ENCODE measurements at regions of chr2 and their contacts with region 1.

Region 1: GRCh38 chr2:9984217-9984739 is 32.8 kb downstream of the GRHL1 start:
- DNase-seq: peak; percentile 78
- H3K4me3 ChIP-seq: no peak overlapping the region
- H3K27ac ChIP-seq: no peak overlapping the region
- H3K4me1 ChIP-seq: peaks cover 22 to 25% of the 10 kb centered on the region in 2 experiments
- H3K27me3 ChIP-seq: no peaks in the 10 kb centered on the region
- CTCF ChIP-seq: peak; percentile 93
- EP300 ChIP-seq: no peak
- RAD21 ChIP-seq: peak; percentile 89

Region 2: GRCh38 chr2:9843229-9844035 is 140.8 kb before region 1 on chr2 and contains the start of gene TAF1B:
- CTCF ChIA-PET with region 1: interaction called, 12 read pairs
- POLR2A ChIA-PET with region 1: no interaction called
- DNase-seq: peak; percentile 99
- H3K4me3 ChIP-seq: peak within 1 kb of the TSS; percentile 60 to 86
- H3K27ac ChIP-seq: peak within 1 kb of the TSS; percentile 89 to 95
- H3K4me1 ChIP-seq: peaks cover 15 to 20% of the 10 kb centered on the region in 2 experiments
- H3K27me3 ChIP-seq: no peaks in the 10 kb centered on the region
- CTCF ChIP-seq: peak; percentile 43
- EP300 ChIP-seq: no peak
- RAD21 ChIP-seq: no peak
- polyA plus RNA-seq, gene TAF1B: 7.8 and 8.3 TPM in 2 replicates

Region 3: GRCh38 chr2:9961013-9961412 is 23.3 kb before region 1 on chr2:
- CTCF ChIA-PET with region 1: interaction called, 107 read pairs
- POLR2A ChIA-PET with region 1: no interaction called
- DNase-seq: peak; percentile 88
- H3K4me3 ChIP-seq: no peak overlapping the region
- H3K27ac ChIP-seq: no peak overlapping the region; a peak in 1 of 4 replicates
- H3K4me1 ChIP-seq: peaks cover 0 to 9% of the 10 kb centered on the region in 2 experiments; a peak in 2 of 4 replicates
- H3K27me3 ChIP-seq: no peaks in the 10 kb centered on the region
- CTCF ChIP-seq: no peak
- EP300 ChIP-seq: no peak
- RAD21 ChIP-seq: no peak

Region 4: GRCh38 chr2:10019174-10019573 is 34.9 kb after region 1 on chr2:
- CTCF ChIA-PET with region 1: interaction called, 38 read pairs
- POLR2A ChIA-PET with region 1: no interaction called
- DNase-seq: no peak
- H3K4me3 ChIP-seq: no peak overlapping the region
- H3K27ac ChIP-seq: no peak overlapping the region; a peak in 1 of 4 replicates
- H3K4me1 ChIP-seq: peaks cover 0 to 8% of the 10 kb centered on the region in 2 experiments; a peak in 2 of 4 replicates
- H3K27me3 ChIP-seq: peaks cover 6% of the 10 kb centered on the region; the same call in 1 of the 2 replicates
- CTCF ChIP-seq: no peak
- EP300 ChIP-seq: no peak
- RAD21 ChIP-seq: no peak

Region 5: GRCh38 chr2:10043906-10044601 is 59.8 kb after region 1 on chr2:
- CTCF ChIA-PET with region 1: interaction called, 357 read pairs
- POLR2A ChIA-PET with region 1: interaction called, 8 read pairs
- DNase-seq: peak; percentile 98
- H3K4me3 ChIP-seq: peak overlapping the region; percentile 59 to 68
- H3K27ac ChIP-seq: peak overlapping the region; percentile 58 to 77; a peak in 2 of 4 replicates
- H3K4me1 ChIP-seq: peaks cover 6 to 22% of the 10 kb centered on the region in 2 experiments; a peak in 1 of 4 replicates
- H3K27me3 ChIP-seq: no peaks in the 10 kb centered on the region
- CTCF ChIP-seq: no peak
- EP300 ChIP-seq: no peak
- RAD21 ChIP-seq: no peak

Region 6: GRCh38 chr2:10072656-10073480 is 88.6 kb after region 1 on chr2:
- CTCF ChIA-PET with region 1: interaction called, 26 read pairs
- POLR2A ChIA-PET with region 1: no interaction called
- DNase-seq: peak; percentile 97
- H3K4me3 ChIP-seq: no peak overlapping the region; a peak in 1 of 4 replicates
- H3K27ac ChIP-seq: no peak overlapping the region
- H3K4me1 ChIP-seq: peaks cover 0 to 2% of the 10 kb centered on the region in 2 experiments; a peak in 1 of 4 replicates
- H3K27me3 ChIP-seq: peaks cover 17% of the 10 kb centered on the region; the same call in 1 of the 2 replicates
- CTCF ChIP-seq: peak; percentile 96
- EP300 ChIP-seq: no peak
- RAD21 ChIP-seq: peak; percentile 91